Panc1 (cell line): ENCODE measurements at regions of chr11 and their contacts with region 1.

Region 1: DNA sequence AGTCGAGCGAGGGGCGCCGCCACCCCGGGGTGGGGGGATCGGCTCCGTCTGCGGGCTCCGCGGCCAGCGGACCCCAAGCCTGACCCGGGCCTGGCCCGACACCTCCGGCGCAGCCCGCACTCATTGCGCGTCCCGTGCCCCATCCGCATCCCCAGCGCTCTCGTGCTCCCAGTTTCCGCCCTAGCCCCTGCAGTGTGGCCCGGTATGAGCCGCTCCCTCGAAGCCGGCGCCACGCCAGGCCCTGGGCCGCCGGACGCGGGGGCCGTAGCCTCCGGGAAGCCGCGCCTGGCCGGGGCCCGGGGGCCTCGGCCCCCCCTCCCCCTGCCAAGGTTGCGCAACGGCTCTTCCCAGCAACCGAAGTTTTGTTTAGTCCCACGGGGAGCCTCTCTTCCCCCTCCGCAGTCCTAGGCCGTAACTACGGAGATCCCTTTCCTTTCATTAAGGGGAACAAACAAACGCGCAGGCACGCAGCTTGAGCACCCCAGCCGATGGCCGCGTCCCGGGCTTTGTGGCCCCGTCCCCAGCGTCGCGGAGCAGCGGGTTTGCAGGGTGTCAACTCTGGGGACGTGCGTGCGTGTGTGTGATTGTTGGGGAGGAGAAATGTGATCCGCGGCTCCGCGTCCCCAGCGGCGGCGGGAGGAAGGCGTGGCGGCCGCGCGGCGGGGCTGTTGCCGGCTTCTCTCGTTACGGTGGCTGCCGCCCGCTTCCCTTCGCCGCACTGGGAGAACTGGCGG is 883 bp downstream of the HIPK3 start:
- DNase-seq: peak; percentile 25
- ATAC-seq: peak; percentile 76
- H3K4me3 ChIP-seq: peak overlapping the region; percentile 80 to 85
- H3K27ac ChIP-seq: peak overlapping the region; percentile 63
- H3K4me1 ChIP-seq: peaks cover 19% of the 10 kb centered on the region
- H3K27me3 ChIP-seq: no peaks in the 10 kb centered on the region
- CTCF ChIP-seq: peak; percentile 24; the same call in 1 of the 2 replicates

Region 2: GRCh38 chr11:33161120-33162005 is 96.7 kb before region 1 on chr11 and contains the start of gene CSTF3:
- CTCF ChIA-PET with region 1: interaction called, 5 read pairs
- POLR2A ChIA-PET with region 1: interaction called, 3 read pairs
- in situ Hi-C with region 1: no loop called
- intact Hi-C with region 1: loop called (anchors 2 kb)
- DNase-seq: peak; percentile 94
- ATAC-seq: peak; percentile 99
- H3K4me3 ChIP-seq: peak within 1 kb of the TSS; percentile 93 to 96
- H3K27ac ChIP-seq: peak within 1 kb of the TSS; percentile 99
- H3K4me1 ChIP-seq: peaks cover 13% of the 10 kb centered on the region; the same call in 1 of the 2 replicates
- H3K27me3 ChIP-seq: no peaks in the 10 kb centered on the region
- CTCF ChIP-seq: no peak
- total RNA-seq, gene CSTF3: 29.8 TPM

Region 3: GRCh38 chr11:33172996-33173395 is 85.1 kb before region 1 on chr11:
- CTCF ChIA-PET with region 1: no interaction called
- POLR2A ChIA-PET with region 1: interaction called, 12 read pairs
- in situ Hi-C with region 1: no loop called
- intact Hi-C with region 1: no loop called
- DNase-seq: no peak
- ATAC-seq: no peak
- H3K4me3 ChIP-seq: no peak overlapping the region
- H3K27ac ChIP-seq: no peak overlapping the region
- H3K4me1 ChIP-seq: no peaks in the 10 kb centered on the region
- H3K27me3 ChIP-seq: no peaks in the 10 kb centered on the region
- CTCF ChIP-seq: no peak

Region 4: GRCh38 chr11:33280411-33280810 is 22.3 kb after region 1 on chr11:
- CTCF ChIA-PET with region 1: no interaction called
- POLR2A ChIA-PET with region 1: no interaction called
- in situ Hi-C with region 1: no loop called
- intact Hi-C with region 1: no loop called
- DNase-seq: no peak
- ATAC-seq: no peak
- H3K4me3 ChIP-seq: no peak overlapping the region
- H3K27ac ChIP-seq: no peak overlapping the region
- H3K4me1 ChIP-seq: no peaks in the 10 kb centered on the region
- H3K27me3 ChIP-seq: no peaks in the 10 kb centered on the region
- CTCF ChIP-seq: no peak

Region 5: DNA sequence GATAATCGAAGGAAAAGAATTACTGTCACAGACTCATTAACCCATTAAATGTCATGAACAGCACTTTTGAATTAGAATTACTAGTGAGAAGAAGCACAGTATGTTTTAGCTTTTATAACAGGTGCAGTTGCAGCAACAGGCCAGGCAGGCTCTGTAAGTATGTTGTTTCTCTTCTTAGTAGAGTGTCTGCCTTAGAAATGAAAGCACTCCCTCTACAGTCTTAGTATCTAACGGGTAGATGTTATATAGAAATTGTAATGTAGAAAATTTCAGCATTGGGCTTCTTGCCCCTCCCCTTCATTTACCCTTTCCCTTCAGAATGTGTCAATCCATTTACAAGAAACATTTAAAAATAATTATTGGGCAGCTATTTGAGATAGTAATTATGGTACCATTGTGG is 86.5 kb after region 1 on chr11:
- CTCF ChIA-PET with region 1: interaction called, 10 read pairs
- POLR2A ChIA-PET with region 1: no interaction called
- in situ Hi-C with region 1: no loop called
- intact Hi-C with region 1: no loop called
- DNase-seq: no peak
- ATAC-seq: no peak
- H3K4me3 ChIP-seq: no peak overlapping the region
- H3K27ac ChIP-seq: no peak overlapping the region
- H3K4me1 ChIP-seq: no peaks in the 10 kb centered on the region
- H3K27me3 ChIP-seq: no peaks in the 10 kb centered on the region
- CTCF ChIP-seq: no peak